Activated naive CD4-positive, alpha-beta T cell treated with anti-CD3 and anti-CD28 coated beads for 36 hours (primary cell): ENCODE measurements at regions of chr10 and their contacts with region 1.

Region 1: GRCh38 chr10:119199231-119199992 is 8.0 kb upstream of the GRK5 start:
- DNase-seq: peak; percentile 71
- H3K4me3 Mint-ChIP-seq: no peak overlapping the region
- H3K27ac Mint-ChIP-seq: no peak overlapping the region
- H3K4me1 Mint-ChIP-seq: peaks cover 15% of the 10 kb centered on the region
- H3K27me3 Mint-ChIP-seq: no peaks in the 10 kb centered on the region

Region 2: GRCh38 chr10:118568327-118568848 is 631.0 kb before region 1 on chr10:
- CTCF ChIA-PET with region 1: no interaction called
- intact Hi-C with region 1: loop called (anchors 2 kb)
- DNase-seq: peak; percentile 68
- H3K4me3 Mint-ChIP-seq: no peak overlapping the region
- H3K27ac Mint-ChIP-seq: no peak overlapping the region
- H3K4me1 Mint-ChIP-seq: peaks cover 7% of the 10 kb centered on the region
- H3K27me3 Mint-ChIP-seq: no peaks in the 10 kb centered on the region

Region 3: DNA sequence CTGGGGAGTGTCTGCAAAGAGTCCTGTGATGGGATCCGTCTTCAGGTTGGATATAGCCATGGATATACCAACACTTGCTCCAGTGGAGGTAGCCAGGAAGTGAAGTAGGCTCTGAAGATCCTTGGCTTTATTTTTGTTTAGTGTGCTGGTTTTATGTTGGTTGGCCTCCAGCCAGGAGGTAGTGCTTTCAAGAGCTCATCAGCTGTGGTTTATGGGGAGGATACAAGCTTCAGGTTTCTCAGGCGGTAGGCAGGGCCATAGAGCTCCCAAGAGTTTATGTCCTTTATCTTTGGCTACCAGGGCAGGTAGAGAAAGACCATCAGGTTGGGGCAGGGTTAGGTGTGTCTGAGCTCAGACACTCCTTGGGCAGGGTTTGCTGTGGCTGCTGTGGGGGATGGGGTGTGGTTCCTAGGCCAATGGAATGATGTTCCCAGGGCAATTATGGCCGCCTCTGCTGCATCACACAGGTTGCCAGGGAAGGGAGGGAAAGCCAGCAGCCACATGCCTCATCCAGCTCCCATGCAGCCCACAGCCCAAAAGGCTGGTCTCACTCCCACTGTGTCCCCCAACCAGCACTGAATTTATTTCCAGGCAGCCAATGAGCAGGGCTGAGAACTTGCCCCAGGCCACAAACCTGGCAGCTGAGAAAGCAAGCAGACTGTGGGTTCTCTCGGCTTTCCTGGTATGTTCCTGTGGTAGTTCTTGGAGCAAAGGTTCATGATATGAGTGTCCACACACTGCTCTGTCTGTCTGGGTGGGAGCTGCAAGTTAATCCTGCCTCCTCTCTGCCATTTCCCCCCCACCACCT is 537.0 kb before region 1 on chr10:
- CTCF ChIA-PET with region 1: no interaction called
- intact Hi-C with region 1: no loop called
- DNase-seq: no peak
- H3K4me3 Mint-ChIP-seq: no peak overlapping the region
- H3K27ac Mint-ChIP-seq: no peak overlapping the region
- H3K4me1 Mint-ChIP-seq: peaks cover 61% of the 10 kb centered on the region
- H3K27me3 Mint-ChIP-seq: no peaks in the 10 kb centered on the region

Region 4: GRCh38 chr10:119024882-119025710 is 174.3 kb before region 1 on chr10:
- CTCF ChIA-PET with region 1: no interaction called
- intact Hi-C with region 1: no loop called
- DNase-seq: no peak
- H3K4me3 Mint-ChIP-seq: no peak overlapping the region
- H3K27ac Mint-ChIP-seq: no peak overlapping the region
- H3K4me1 Mint-ChIP-seq: no peaks in the 10 kb centered on the region
- H3K27me3 Mint-ChIP-seq: peaks cover 4% of the 10 kb centered on the region

Region 5: DNA sequence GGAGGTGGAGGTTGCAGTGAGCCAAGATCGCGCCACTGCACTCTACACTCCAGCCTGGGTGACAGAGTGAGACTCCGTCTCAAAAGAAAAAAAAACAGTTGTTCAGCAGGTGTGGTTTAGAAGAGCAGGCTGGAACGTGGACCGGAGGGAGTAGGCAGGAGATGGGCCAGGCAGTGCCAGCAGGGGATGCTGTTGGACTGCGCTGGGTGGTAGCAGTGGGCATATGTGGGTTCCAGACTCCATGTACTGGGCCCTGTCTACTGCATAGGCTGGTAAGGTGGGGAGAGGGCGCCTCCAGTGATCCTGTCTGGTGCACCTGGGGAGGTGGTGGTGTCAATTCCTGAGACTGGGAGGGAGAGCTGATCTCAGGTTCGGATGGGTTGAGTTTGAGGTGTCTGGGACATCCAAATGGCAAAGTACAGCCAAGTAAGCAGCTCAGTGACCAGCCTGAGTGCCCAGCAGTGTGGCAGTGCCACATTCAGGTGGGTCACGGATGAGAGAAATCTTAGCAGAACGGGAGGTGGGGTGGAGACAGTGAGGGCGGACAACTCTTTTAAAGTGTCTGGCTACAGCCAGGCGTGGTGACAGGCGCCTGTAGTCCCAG is 59.8 kb before region 1 on chr10:
- CTCF ChIA-PET with region 1: interaction called, 5 read pairs
- intact Hi-C with region 1: loop called (anchors 1 kb)
- DNase-seq: peak; percentile 73
- H3K4me3 Mint-ChIP-seq: no peak overlapping the region
- H3K27ac Mint-ChIP-seq: peak overlapping the region; percentile 42
- H3K4me1 Mint-ChIP-seq: peaks cover 11% of the 10 kb centered on the region
- H3K27me3 Mint-ChIP-seq: no peaks in the 10 kb centered on the region

Region 6: DNA sequence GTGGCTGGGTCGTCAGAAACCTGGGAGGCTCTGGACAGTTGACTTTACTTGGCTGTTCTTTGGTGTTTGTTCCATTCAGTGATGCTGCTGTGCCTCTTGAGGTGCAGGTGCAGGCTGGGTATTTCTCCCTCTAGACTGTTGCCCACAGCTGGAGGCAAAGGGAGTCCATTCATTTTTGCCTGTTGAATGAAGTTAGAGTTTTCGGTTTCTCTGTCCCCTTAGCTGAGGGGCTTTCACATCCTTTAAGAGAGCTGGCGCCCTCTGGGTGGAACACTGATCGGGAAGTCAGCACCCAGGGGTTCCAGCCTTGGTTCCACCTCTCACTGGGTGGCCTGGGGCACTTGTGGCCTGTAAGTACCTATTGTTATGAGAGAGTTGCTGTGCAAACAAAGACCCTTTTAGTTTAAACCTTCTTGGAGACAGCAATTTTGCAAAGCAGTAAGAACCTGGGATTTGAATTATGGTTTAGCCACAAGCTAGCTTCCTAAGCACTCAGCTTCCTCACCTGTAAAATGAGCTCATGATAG is 75.2 kb after region 1 on chr10:
- CTCF ChIA-PET with region 1: interaction called, 11 read pairs
- intact Hi-C with region 1: no loop called
- DNase-seq: no peak
- H3K4me3 Mint-ChIP-seq: no peak overlapping the region
- H3K27ac Mint-ChIP-seq: no peak overlapping the region
- H3K4me1 Mint-ChIP-seq: peaks cover 46% of the 10 kb centered on the region
- H3K27me3 Mint-ChIP-seq: no peaks in the 10 kb centered on the region

Region 7: GRCh38 chr10:119439922-119440321 is 240.5 kb after region 1 on chr10:
- CTCF ChIA-PET with region 1: interaction called, 67 read pairs
- intact Hi-C with region 1: loop called (anchors 1 kb)
- DNase-seq: no peak
- H3K4me3 Mint-ChIP-seq: no peak overlapping the region
- H3K27ac Mint-ChIP-seq: no peak overlapping the region
- H3K4me1 Mint-ChIP-seq: peaks cover 1% of the 10 kb centered on the region
- H3K27me3 Mint-ChIP-seq: no peaks in the 10 kb centered on the region

Region 8: GRCh38 chr10:119489991-119490326 is 290.5 kb after region 1 on chr10:
- CTCF ChIA-PET with region 1: interaction called, 14 read pairs
- intact Hi-C with region 1: no loop called
- DNase-seq: no peak
- H3K4me3 Mint-ChIP-seq: peak overlapping the region; percentile 79
- H3K27ac Mint-ChIP-seq: peak overlapping the region; percentile 91
- H3K4me1 Mint-ChIP-seq: peaks cover 50% of the 10 kb centered on the region
- H3K27me3 Mint-ChIP-seq: no peaks in the 10 kb centered on the region

Region 9: DNA sequence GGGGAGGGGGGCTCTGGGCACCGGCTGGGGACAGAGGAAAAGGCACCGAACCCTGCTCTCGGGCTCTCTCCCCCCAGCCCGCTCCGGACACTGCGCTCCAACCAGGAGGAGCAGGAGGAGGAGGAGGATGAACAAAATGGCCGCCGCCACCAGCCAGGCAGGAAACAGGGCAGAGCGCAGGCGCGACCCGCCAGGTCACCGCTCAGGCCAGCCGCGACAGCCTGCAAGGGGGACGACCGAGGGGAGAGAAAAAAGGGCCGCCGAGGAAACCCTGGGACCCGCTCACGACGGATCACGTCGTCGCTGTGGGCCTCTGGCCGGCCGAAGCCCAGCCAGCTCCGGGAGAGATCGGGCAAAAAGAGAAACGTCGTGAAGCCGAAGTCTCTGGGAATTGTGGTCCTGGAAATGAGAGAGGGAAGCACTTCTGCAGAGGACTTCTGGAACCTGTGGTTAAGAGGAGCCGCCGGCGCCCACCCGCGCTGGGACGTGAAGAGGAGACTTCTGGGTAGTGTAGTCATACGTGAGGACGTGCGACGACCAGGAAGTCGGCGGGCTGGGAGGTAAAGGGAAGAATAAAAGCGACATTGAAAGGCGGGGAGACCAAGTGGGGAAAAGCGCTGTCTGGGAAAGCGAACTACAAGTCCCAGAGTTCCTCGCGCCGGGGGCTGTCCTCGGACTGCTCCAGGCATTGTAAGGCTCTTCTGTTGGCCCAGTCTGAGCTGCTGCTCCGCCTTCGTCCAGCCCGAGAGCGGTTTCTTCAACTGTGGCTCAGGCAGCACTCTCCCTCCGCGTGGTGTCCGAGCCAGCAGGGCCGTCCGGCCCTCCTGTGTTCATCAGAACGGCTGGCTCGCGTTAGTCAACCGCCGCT is 397.4 kb after region 1 on chr10 and contains the start of gene TIAL1:
- CTCF ChIA-PET with region 1: no interaction called
- intact Hi-C with region 1: loop called (anchors 2 kb)
- DNase-seq: peak; percentile 98
- H3K4me3 Mint-ChIP-seq: peak within 1 kb of the TSS; percentile 93
- H3K27ac Mint-ChIP-seq: peak within 1 kb of the TSS; percentile 98
- H3K4me1 Mint-ChIP-seq: peaks cover 47% of the 10 kb centered on the region
- H3K27me3 Mint-ChIP-seq: no peaks in the 10 kb centered on the region
- total RNA-seq, gene TIAL1: 184 to 192 TPM

Region 10: DNA sequence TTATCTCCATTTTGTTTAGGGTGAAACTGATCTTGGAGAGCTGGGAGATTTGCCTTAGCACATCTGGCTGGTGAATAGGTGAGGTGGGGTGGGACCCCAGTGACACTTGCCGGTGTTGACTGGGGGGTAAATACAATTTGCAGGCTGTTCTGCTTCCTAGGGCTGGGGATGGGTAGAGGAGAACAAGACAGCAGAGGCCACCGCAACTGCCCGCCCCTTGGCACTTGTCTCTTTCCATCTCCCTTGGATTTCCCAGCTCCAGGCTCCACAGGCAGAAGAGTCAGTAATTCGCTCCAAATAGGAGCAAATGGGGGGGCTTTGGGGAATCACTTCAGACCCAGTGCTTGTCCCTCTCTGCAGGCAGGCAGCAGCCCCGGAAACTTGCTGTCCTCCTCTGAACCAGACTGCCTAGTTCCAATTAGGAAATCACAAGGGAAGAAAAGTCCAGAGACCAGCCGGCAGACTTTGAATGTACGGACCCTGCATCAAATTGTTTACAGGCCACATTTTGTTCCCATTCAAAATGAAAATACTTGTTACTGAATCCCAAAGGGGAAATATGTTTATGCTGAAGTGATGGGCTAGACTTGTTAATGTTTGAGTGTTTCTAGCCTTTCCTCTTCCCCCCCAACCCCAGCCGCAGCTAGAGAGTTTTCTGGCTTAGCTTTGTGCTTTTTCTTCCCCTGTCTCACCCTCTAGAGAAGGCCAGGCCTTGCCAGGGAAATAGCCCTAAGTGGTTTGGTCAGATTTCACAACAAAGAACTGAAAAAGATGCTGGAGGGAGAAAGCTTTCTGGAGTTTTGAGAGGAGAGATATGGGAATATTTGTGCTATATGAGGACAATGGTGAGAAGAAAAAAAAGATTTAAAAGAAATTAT is 516.5 kb after region 1 on chr10:
- CTCF ChIA-PET with region 1: no interaction called
- intact Hi-C with region 1: no loop called
- DNase-seq: no peak
- H3K4me3 Mint-ChIP-seq: no peak overlapping the region
- H3K27ac Mint-ChIP-seq: no peak overlapping the region
- H3K4me1 Mint-ChIP-seq: peaks cover 7% of the 10 kb centered on the region
- H3K27me3 Mint-ChIP-seq: no peaks in the 10 kb centered on the region

Region 11: GRCh38 chr10:119933179-119933578 is 733.8 kb after region 1 on chr10:
- CTCF ChIA-PET with region 1: no interaction called
- intact Hi-C with region 1: no loop called
- DNase-seq: no peak
- H3K4me3 Mint-ChIP-seq: no peak overlapping the region
- H3K27ac Mint-ChIP-seq: no peak overlapping the region
- H3K4me1 Mint-ChIP-seq: peaks cover 5% of the 10 kb centered on the region
- H3K27me3 Mint-ChIP-seq: no peaks in the 10 kb centered on the region